ENCODE measurements at regions of chr1 and their contacts with region 1.

Region 1: GRCh38 chr1:25042331-25043227 is 112.5 kb upstream of the RUNX3 start:
- DNase-seq: peak in 1 of 9 experiments; percentile 36
- ATAC-seq: peak; percentile 29
- H3K4me3 ChIP-seq: no peak overlapping the region
- H3K4me3 Mint-ChIP-seq: no peak overlapping the region
- H3K27ac ChIP-seq: no peak overlapping the region
- H3K27ac Mint-ChIP-seq: peak overlapping the region; percentile 10
- H3K4me1 ChIP-seq: peaks cover 21% of the 10 kb centered on the region
- H3K4me1 Mint-ChIP-seq: peaks cover 28% of the 10 kb centered on the region
- H3K27me3 ChIP-seq: no peaks in the 10 kb centered on the region
- H3K27me3 Mint-ChIP-seq: no peaks in the 10 kb centered on the region
- CTCF ChIP-seq: no peak

Region 2: DNA sequence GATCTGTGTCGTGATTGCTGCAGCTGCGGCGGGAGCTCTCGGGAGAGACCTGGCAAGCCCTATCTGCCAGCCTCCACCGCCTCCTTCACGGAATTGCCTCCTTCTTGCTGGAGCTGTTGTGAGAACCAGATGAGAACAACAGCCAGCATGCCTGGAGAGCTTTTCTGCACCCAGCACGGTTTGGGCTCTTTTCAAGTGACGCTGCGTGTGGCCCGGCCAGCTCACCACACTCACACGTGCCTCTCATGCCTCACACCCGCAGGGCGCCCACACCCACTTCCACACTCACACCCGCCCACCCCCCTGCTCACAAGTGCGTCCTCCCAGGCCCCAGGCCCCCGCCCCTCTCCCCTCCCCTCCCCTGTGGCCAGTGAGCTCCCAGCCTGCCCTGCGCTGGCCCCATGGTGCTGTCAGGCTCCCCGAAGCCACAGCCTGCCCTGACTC is 23.2 kb after region 1 on chr1:
- CTCF ChIA-PET with region 1: interaction called, 10 read pairs
- POLR2A ChIA-PET with region 1: interaction called, 4 read pairs
- intact Hi-C with region 1: no loop called
- DNase-seq: peak; percentile 35 to 94 (median 63)
- ATAC-seq: peak; percentile 74
- H3K4me3 ChIP-seq: peak overlapping the region; percentile 16 to 67
- H3K4me3 Mint-ChIP-seq: peak overlapping the region; percentile 78
- H3K27ac ChIP-seq: peak overlapping the region; percentile 57 to 79
- H3K27ac Mint-ChIP-seq: peak overlapping the region; percentile 92
- H3K4me1 ChIP-seq: peaks cover 25% of the 10 kb centered on the region
- H3K4me1 Mint-ChIP-seq: peaks cover 34% of the 10 kb centered on the region
- H3K27me3 ChIP-seq: no peaks in the 10 kb centered on the region
- H3K27me3 Mint-ChIP-seq: no peaks in the 10 kb centered on the region
- CTCF ChIP-seq: no peak

Region 3: GRCh38 chr1:25704267-25704691 is 661.7 kb after region 1 on chr1:
- CTCF ChIA-PET with region 1: no interaction called
- POLR2A ChIA-PET with region 1: no interaction called
- intact Hi-C with region 1: no loop called
- DNase-seq: peak in 7 of 9 experiments; percentile 10 to 76 (median 47)
- ATAC-seq: peak; percentile 95
- H3K4me3 ChIP-seq: no peak overlapping the region
- H3K4me3 Mint-ChIP-seq: no peak overlapping the region
- H3K27ac ChIP-seq: no peak overlapping the region
- H3K27ac Mint-ChIP-seq: peak overlapping the region; percentile 78
- H3K4me1 ChIP-seq: peaks cover 22% of the 10 kb centered on the region
- H3K4me1 Mint-ChIP-seq: peaks cover 43% of the 10 kb centered on the region
- H3K27me3 ChIP-seq: no peaks in the 10 kb centered on the region
- H3K27me3 Mint-ChIP-seq: no peaks in the 10 kb centered on the region
- CTCF ChIP-seq: no peak